Naive thymus-derived CD4-positive, alpha-beta T cell (primary cell): ENCODE measurements at regions of chr18 and their contacts with region 1.

Region 1: DNA sequence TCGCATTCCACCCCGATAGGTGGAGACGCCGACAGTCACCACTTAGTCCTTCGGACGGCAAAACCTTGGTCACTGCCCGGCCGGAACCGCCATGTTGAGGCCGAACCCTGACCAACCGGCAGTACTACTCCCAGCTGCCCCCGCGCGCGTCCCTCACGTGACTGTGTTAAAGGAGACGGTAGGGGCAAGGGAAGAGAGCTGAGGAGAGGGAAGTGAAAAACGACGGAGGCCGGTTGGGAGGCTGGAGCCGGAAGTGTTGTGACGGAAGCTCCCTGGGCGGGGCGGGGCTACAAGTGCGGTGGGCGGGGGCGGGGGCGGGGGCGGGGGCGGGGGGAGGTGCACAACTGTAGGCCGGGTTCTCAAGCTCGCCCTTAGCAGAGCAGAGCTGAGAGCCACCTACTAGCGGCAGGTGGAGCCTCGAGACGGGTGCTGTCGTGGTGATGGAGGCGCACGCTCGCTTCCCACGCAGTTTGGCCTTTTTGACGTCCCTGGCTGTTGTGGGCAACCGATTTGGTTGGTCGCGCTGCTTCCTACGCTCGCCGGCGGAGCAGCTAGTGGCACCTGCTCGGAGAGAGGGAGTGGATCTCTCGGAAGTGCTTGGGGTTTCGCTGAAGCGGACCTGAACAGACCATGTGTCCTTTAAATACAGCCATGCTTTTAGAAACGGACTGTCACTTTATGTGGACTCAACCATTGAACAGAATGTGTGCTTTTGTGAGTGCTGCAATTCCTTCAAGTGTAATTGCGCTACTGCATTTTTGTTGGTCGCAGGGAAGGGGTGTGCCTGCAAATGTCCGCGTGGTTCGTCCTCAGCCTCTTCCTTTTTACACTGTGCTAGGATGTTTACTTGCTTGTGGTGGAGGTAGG is at the start of gene TRAPPC8:
- DNase-seq: peak; percentile 81 to 94 (median 91)
- ATAC-seq: peak; percentile 91
- H3K4me3 ChIP-seq: peak within 1 kb of the TSS; percentile 98
- H3K4me3 Mint-ChIP-seq: peak within 1 kb of the TSS; percentile 95 to 100 (median 98)
- H3K27ac ChIP-seq: peak within 1 kb of the TSS; percentile 97
- H3K27ac Mint-ChIP-seq: peak within 1 kb of the TSS; percentile 95 to 100 (median 99)
- H3K4me1 ChIP-seq: peaks cover 17 to 26% of the 10 kb centered on the region in 2 donors
- H3K4me1 Mint-ChIP-seq: peaks cover 28 to 54% (median 44%) of the 10 kb centered on the region in 7 donors
- H3K27me3 ChIP-seq: no peaks in the 10 kb centered on the region
- H3K27me3 Mint-ChIP-seq: no peaks in the 10 kb centered on the region
- total RNA-seq, gene TRAPPC8: 31.0 to 62.7 (median 44.3) TPM

Region 2: GRCh38 chr18:31774477-31774785 is 168.8 kb before region 1 on chr18:
- CTCF ChIA-PET with region 1: no interaction called
- POLR2A ChIA-PET with region 1: no interaction called
- intact Hi-C with region 1: no loop called
- DNase-seq: no peak
- ATAC-seq: no peak
- H3K4me3 ChIP-seq: no peak overlapping the region
- H3K4me3 Mint-ChIP-seq: no peak overlapping the region
- H3K27ac ChIP-seq: no peak overlapping the region
- H3K27ac Mint-ChIP-seq: no peak overlapping the region
- H3K4me1 ChIP-seq: no peaks in the 10 kb centered on the region
- H3K4me1 Mint-ChIP-seq: peaks cover 0 to 3% (median 0%) of the 10 kb centered on the region in 7 donors
- H3K27me3 ChIP-seq: no peaks in the 10 kb centered on the region
- H3K27me3 Mint-ChIP-seq: peaks cover 0 to 8% (median 0%) of the 10 kb centered on the region in 5 donors

Region 3: GRCh38 chr18:31860488-31860887 is 82.7 kb before region 1 on chr18:
- CTCF ChIA-PET with region 1: no interaction called
- POLR2A ChIA-PET with region 1: no interaction called
- intact Hi-C with region 1: loop called in 1 of 2 experiments (anchors 5 kb)
- DNase-seq: no peak
- ATAC-seq: no peak
- H3K4me3 ChIP-seq: no peak overlapping the region
- H3K4me3 Mint-ChIP-seq: no peak overlapping the region
- H3K27ac ChIP-seq: no peak overlapping the region
- H3K27ac Mint-ChIP-seq: no peak overlapping the region
- H3K4me1 ChIP-seq: no peaks in the 10 kb centered on the region
- H3K4me1 Mint-ChIP-seq: peaks cover 0 to 6% (median 0%) of the 10 kb centered on the region in 7 donors
- H3K27me3 ChIP-seq: no peaks in the 10 kb centered on the region
- H3K27me3 Mint-ChIP-seq: no peaks in the 10 kb centered on the region

Region 4: GRCh38 chr18:31977270-31977872 is 34.1 kb after region 1 on chr18:
- CTCF ChIA-PET with region 1: interaction called, 7 read pairs
- POLR2A ChIA-PET with region 1: no interaction called
- intact Hi-C with region 1: loop called in 1 of 2 experiments (anchors 1 kb)
- DNase-seq: peak in 6 of 9 donors; percentile 12 to 40 (median 29)
- ATAC-seq: peak; percentile 63
- H3K4me3 ChIP-seq: no peak overlapping the region
- H3K4me3 Mint-ChIP-seq: no peak overlapping the region
- H3K27ac ChIP-seq: no peak overlapping the region
- H3K27ac Mint-ChIP-seq: no peak overlapping the region
- H3K4me1 ChIP-seq: no peaks in the 10 kb centered on the region
- H3K4me1 Mint-ChIP-seq: peaks cover 0 to 2% (median 0%) of the 10 kb centered on the region in 7 donors
- H3K27me3 ChIP-seq: no peaks in the 10 kb centered on the region
- H3K27me3 Mint-ChIP-seq: peaks cover 0 to 2% (median 0%) of the 10 kb centered on the region in 5 donors